WTC11 (cell line): ENCODE measurements at regions of chr2 and their contacts with region 1.

Region 1: DNA sequence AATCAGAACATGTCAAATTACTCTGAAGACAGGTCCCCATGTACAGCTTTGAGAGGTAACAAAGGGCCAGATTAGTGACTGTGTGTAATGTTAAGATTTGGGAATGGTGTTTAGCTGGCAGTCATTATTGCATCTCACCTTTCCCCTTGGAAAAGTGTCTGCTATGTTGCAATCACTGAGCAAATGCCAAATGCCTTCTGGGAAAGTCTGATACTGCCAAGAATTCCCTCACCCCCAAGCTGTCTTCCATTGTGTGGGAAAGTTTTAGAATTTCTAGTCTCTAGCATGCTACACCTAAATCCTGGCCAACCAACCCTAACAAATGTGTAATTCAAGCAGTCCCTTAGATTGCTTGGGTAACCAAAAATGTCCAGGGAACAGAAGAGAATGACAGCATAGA is 13.6 kb upstream of the PELI1 start:
- DNase-seq: no peak
- ATAC-seq: no peak
- H3K4me3 Mint-ChIP-seq: no peak overlapping the region
- H3K27ac Mint-ChIP-seq: no peak overlapping the region
- H3K4me1 Mint-ChIP-seq: peaks cover 6% of the 10 kb centered on the region
- H3K27me3 Mint-ChIP-seq: no peaks in the 10 kb centered on the region
- CTCF ChIP-seq: no peak

Region 2: DNA sequence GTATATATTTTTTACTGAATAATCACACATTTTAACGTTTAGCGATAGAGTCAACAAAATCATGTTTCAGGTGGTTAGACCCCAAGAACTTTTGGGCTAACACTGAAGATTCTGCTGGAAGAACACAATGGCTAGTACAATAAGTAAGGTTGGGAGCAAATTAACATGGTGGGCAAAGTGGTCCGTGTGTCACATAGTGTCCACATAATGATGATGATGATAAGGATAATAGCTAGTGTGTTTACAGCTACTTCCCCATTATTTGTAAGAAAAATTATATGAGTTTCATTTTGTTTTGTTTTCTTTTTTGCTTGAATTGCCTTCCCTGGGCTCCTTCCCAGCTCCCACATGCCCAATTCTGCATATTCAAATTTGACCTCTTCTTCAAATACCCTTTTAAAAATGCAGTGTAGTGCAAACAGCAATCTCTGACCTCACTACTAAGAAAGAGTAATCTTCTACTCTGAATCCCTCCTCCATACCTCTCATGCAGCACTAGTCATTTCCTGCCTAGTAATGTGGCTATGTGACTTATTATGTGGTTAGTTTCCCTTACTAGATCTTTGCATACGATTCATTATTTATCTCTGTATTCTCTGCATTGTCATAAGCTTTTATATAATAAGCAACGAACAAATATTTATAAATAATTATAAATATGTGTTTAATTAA is 121.6 kb before region 1 on chr2:
- CTCF ChIA-PET with region 1: no interaction called
- POLR2A ChIA-PET with region 1: interaction called, 11 read pairs
- DNase-seq: no peak
- ATAC-seq: no peak
- H3K4me3 Mint-ChIP-seq: no peak overlapping the region
- H3K27ac Mint-ChIP-seq: no peak overlapping the region
- H3K4me1 Mint-ChIP-seq: peaks cover 19% of the 10 kb centered on the region
- H3K27me3 Mint-ChIP-seq: no peaks in the 10 kb centered on the region
- CTCF ChIP-seq: no peak

Region 3: GRCh38 chr2:64133828-64134227 is 24.0 kb before region 1 on chr2:
- CTCF ChIA-PET with region 1: no interaction called
- POLR2A ChIA-PET with region 1: no interaction called
- DNase-seq: no peak
- ATAC-seq: no peak
- H3K4me3 Mint-ChIP-seq: no peak overlapping the region
- H3K27ac Mint-ChIP-seq: 0 out of 2 replicates have a peak overlapping the region, but pooled peaks have one; percentile 25
- H3K4me1 Mint-ChIP-seq: peaks cover 80% of the 10 kb centered on the region
- H3K27me3 Mint-ChIP-seq: no peaks in the 10 kb centered on the region
- CTCF ChIP-seq: no peak

Region 4: GRCh38 chr2:64144057-64145013 is 13.5 kb before region 1 on chr2 and contains the start of gene PELI1:
- CTCF ChIA-PET with region 1: no interaction called
- POLR2A ChIA-PET with region 1: no interaction called
- DNase-seq: peak; percentile 99
- ATAC-seq: peak; percentile 96
- H3K4me3 Mint-ChIP-seq: peak within 1 kb of the TSS; percentile 89
- H3K27ac Mint-ChIP-seq: peak within 1 kb of the TSS; percentile 91
- H3K4me1 Mint-ChIP-seq: peaks cover 32% of the 10 kb centered on the region
- H3K27me3 Mint-ChIP-seq: no peaks in the 10 kb centered on the region
- CTCF ChIP-seq: no peak
- total RNA-seq, gene PELI1: 43.0 to 53.5 TPM (median 47.3 TPM) in 3 replicates

Region 5: DNA sequence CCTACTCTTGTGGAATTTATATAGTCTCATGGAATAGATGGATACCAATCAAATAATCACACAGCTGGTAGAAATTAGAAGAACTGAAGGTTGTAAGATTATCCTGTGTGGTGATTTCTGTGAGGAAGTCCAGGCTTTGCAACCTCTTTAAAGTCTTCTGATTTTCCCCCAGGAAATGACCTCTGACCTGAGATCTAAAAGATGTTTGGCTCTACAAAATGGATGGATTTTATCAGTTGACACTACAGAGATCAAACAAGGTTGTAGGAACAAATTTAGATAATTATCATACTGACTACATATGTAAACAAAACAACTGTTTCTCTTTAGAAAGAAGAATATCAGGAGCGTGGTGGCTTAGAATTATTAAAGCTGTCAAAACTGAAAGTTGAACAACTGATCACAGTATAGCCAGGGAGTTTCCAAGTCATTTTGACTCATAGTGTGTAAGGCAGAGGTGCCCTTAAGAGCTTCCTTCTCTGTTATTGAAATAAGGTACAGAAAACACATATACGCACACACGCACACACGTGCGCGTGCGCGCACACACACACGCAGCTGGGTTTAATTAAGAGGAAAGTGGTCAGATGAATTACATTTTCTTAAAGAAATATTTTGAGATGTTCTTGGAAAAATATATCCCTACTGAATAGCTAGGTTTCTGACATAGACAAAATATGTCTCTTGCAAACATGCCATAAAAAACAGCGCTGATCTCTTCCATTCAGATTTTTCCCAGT is 22.0 kb after region 1 on chr2:
- CTCF ChIA-PET with region 1: no interaction called
- POLR2A ChIA-PET with region 1: no interaction called
- DNase-seq: no peak
- ATAC-seq: no peak
- H3K4me3 Mint-ChIP-seq: no peak overlapping the region
- H3K27ac Mint-ChIP-seq: no peak overlapping the region
- H3K4me1 Mint-ChIP-seq: peaks cover 13% of the 10 kb centered on the region
- H3K27me3 Mint-ChIP-seq: no peaks in the 10 kb centered on the region
- CTCF ChIP-seq: no peak